Activated CD4-positive, alpha-beta memory T cell treated with anti-CD3 and anti-CD28 coated beads, Interleukin-2, amount 10 ng/mL, durations not matched to agents 7 days and 5 days (primary cell): ENCODE measurements at regions of chr11 and their contacts with region 1.

Region 1: GRCh38 chr11:62556108-62556871 is 9.7 kb upstream of the AHNAK start:
- DNase-seq: peak; percentile 94
- H3K4me3 Mint-ChIP-seq: peak overlapping the region; percentile 74
- H3K27ac Mint-ChIP-seq: peak overlapping the region; percentile 99
- H3K4me1 Mint-ChIP-seq: peaks cover 99% of the 10 kb centered on the region
- H3K27me3 Mint-ChIP-seq: no peaks in the 10 kb centered on the region

Region 2: GRCh38 chr11:62233730-62234129 is 322.6 kb before region 1 on chr11:
- CTCF ChIA-PET with region 1: no interaction called
- POLR2A ChIA-PET with region 1: no interaction called
- DNase-seq: no peak
- H3K4me3 Mint-ChIP-seq: no peak overlapping the region
- H3K27ac Mint-ChIP-seq: no peak overlapping the region
- H3K4me1 Mint-ChIP-seq: no peaks in the 10 kb centered on the region
- H3K27me3 Mint-ChIP-seq: peaks cover 53% of the 10 kb centered on the region

Region 3: GRCh38 chr11:62421996-62422395 is 134.3 kb before region 1 on chr11:
- CTCF ChIA-PET with region 1: interaction called, 228 read pairs
- POLR2A ChIA-PET with region 1: interaction called, 36 read pairs
- DNase-seq: no peak
- H3K4me3 Mint-ChIP-seq: no peak overlapping the region
- H3K27ac Mint-ChIP-seq: no peak overlapping the region
- H3K4me1 Mint-ChIP-seq: peaks cover 23% of the 10 kb centered on the region
- H3K27me3 Mint-ChIP-seq: peaks cover 1% of the 10 kb centered on the region

Region 4: GRCh38 chr11:62514151-62514550 is 42.1 kb before region 1 on chr11:
- CTCF ChIA-PET with region 1: no interaction called
- POLR2A ChIA-PET with region 1: no interaction called
- DNase-seq: no peak
- H3K4me3 Mint-ChIP-seq: no peak overlapping the region
- H3K27ac Mint-ChIP-seq: no peak overlapping the region
- H3K4me1 Mint-ChIP-seq: peaks cover 3% of the 10 kb centered on the region
- H3K27me3 Mint-ChIP-seq: no peaks in the 10 kb centered on the region

Region 5: DNA sequence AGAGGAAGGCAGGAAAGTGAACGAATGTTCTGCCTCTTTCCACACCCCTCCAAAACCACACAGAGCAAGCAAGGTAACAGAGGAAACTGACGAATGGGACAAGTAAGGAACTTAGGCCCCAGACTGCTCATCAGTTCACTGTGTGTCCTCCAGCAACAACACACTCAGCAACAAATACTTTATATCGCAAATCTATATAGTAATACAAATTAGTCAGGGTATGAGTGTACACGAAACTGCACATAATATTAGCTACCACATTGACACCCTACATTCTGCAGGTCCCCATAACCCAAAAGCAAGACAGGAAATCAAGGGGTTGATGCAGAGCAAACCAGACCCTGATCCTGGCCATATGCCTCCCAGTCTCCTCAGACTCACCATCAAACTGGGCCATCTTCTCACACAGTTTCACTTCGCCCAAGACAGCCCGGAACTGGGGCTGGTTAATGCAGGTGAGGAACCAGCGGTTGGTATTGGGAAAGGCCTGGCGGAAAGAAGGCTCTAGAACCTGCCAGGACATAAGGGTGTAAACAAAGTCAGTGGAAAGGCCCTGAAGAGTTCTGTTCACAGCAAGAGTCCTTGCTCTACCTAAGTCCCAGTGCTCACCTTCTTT is 10.8 kb after region 1 on chr11:
- CTCF ChIA-PET with region 1: interaction called, 20 read pairs
- POLR2A ChIA-PET with region 1: interaction called, 130 read pairs
- DNase-seq: no peak
- H3K4me3 Mint-ChIP-seq: peak overlapping the region; percentile 9
- H3K27ac Mint-ChIP-seq: peak overlapping the region; percentile 73
- H3K4me1 Mint-ChIP-seq: peaks cover 63% of the 10 kb centered on the region
- H3K27me3 Mint-ChIP-seq: no peaks in the 10 kb centered on the region

Region 6: GRCh38 chr11:62601394-62602140 is 45.3 kb after region 1 on chr11 and contains the start of gene MTA2:
- CTCF ChIA-PET with region 1: interaction called, 5 read pairs
- POLR2A ChIA-PET with region 1: interaction called, 14 read pairs
- DNase-seq: peak; percentile 100
- H3K4me3 Mint-ChIP-seq: peak within 1 kb of the TSS; percentile 85
- H3K27ac Mint-ChIP-seq: peak within 1 kb of the TSS; percentile 88
- H3K4me1 Mint-ChIP-seq: peaks cover 53% of the 10 kb centered on the region
- H3K27me3 Mint-ChIP-seq: no peaks in the 10 kb centered on the region
- total RNA-seq, gene MTA2: 226 TPM

Region 7: DNA sequence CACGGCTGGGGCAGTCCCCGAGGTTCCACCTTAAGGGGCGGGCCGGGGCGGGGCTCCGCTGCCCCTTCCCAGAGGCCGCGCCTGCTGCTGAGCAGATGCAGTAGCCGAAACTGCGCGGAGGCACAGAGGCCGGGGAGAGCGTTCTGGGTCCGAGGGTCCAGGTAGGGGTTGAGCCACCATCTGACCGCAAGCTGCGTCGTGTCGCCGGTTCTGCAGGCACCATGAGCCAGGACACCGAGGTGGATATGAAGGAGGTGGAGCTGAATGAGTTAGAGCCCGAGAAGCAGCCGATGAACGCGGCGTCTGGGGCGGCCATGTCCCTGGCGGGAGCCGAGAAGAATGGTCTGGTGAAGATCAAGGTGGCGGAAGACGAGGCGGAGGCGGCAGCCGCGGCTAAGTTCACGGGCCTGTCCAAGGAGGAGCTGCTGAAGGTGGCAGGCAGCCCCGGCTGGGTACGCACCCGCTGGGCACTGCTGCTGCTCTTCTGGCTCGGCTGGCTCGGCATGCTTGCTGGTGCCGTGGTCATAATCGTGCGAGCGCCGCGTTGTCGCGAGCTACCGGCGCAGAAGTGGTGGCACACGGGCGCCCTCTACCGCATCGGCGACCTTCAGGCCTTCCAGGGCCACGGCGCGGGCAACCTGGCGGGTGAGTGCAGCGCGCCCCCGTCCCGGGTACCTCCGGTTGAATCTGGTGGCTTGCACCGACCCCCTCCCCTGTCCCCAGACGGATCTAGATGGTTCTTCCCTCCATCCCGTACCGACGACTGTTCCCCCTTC is 324.7 kb after region 1 on chr11 and contains the start of gene SLC3A2:
- CTCF ChIA-PET with region 1: interaction called, 5 read pairs
- POLR2A ChIA-PET with region 1: interaction called, 13 read pairs
- DNase-seq: peak; percentile 92
- H3K4me3 Mint-ChIP-seq: peak within 1 kb of the TSS; percentile 99
- H3K27ac Mint-ChIP-seq: peak within 1 kb of the TSS; percentile 100
- H3K4me1 Mint-ChIP-seq: peaks cover 51% of the 10 kb centered on the region
- H3K27me3 Mint-ChIP-seq: no peaks in the 10 kb centered on the region
- total RNA-seq, gene SLC3A2: 262 to 279 TPM

Region 8: DNA sequence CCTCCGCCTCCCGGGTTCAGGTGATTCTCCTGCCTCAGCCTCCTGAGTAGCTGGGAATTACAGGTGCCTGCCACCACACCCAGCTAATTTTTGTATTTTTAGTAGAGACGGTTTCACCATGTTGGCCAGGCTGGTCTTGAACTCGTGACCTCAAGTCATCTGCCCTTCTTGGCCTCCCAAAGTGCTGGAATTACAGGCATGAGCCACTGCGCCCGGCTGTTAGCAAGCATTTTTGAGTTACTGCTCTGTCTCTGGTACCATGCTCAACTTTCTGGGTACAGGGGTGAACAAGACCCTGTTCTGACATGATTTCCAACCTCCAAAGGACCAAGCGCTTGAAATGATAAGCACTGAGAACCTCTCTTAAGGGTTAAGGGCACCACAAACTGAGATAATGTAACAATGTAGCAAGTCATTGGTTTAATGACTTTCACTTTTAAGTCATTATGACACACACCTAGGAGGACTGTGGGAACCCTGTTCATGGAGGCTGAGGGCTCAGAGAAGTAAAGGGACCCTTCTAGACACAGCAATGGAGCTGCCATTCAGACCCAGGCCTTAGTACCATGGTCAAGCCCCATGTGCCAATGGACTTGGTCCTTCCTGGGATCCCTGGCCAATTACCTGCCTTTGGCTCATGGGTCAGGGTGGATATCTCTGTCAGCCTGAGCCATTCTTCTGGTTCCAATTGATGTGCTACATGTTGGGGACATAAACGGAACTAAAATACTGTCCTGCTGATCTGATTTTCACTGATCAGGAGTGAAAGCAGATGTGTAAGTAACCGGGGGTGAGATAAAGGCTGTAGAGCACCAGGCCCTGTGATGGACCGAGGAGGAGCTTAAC is 336.0 kb after region 1 on chr11:
- CTCF ChIA-PET with region 1: no interaction called
- POLR2A ChIA-PET with region 1: no interaction called
- DNase-seq: no peak
- H3K4me3 Mint-ChIP-seq: no peak overlapping the region
- H3K27ac Mint-ChIP-seq: no peak overlapping the region
- H3K4me1 Mint-ChIP-seq: peaks cover 6% of the 10 kb centered on the region
- H3K27me3 Mint-ChIP-seq: peaks cover 6% of the 10 kb centered on the region